Esophagus squamous epithelium (tissue), 5 donors: ENCODE measurements at regions of chr9 and their contacts with region 1.

Region 1: DNA sequence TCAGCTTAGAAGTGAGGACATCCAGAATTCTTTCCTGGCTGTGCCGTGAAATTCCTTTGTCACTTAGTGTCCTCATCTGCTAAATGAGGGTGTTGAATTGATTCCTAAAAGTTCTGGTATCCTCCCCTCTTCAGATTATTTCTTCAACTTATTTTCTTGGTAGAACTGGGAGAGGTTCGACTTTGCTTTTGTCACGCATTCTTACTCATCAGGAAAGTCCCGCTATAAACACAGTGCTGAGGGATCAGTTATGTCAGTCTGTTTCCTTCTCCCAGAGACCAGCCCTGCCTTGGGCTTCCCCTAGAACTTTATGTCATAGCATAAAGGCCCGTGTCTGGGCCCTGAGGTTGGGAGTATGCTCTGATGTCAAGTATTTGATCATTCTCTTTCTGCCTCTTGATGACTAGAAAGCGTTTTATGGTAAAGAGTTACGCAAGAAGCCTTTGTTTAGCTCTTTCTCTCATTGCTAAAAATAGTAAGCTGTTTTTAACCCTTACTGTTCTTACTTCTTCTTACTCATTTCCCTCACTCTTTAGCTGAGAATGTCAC is 29.6 kb downstream of the MTAP start:
- DNase-seq: no peak
- H3K4me3 ChIP-seq: no peak overlapping the region
- H3K27ac ChIP-seq: peak overlapping the region; percentile 77 to 87 (median 81)
- H3K4me1 ChIP-seq: peaks cover 21 to 94% (median 47%) of the 10 kb centered on the region in 3 donors
- H3K27me3 ChIP-seq: no peaks in the 10 kb centered on the region
- CTCF ChIP-seq: no peak
- POLR2A ChIP-seq: no peak

Region 2: GRCh38 chr9:21443849-21444625 is 388.0 kb before region 1 on chr9:
- intact Hi-C with region 1: no loop called
- DNase-seq: no peak
- H3K4me3 ChIP-seq: no peak overlapping the region
- H3K27ac ChIP-seq: no peak overlapping the region
- H3K4me1 ChIP-seq: no peaks in the 10 kb centered on the region
- H3K27me3 ChIP-seq: peaks cover 0 to 3% (median 0%) of the 10 kb centered on the region in 4 donors
- CTCF ChIP-seq: no peak
- POLR2A ChIP-seq: no peak

Region 3: GRCh38 chr9:21624675-21625644 is 207.1 kb before region 1 on chr9:
- intact Hi-C with region 1: no loop called
- DNase-seq: no peak
- H3K4me3 ChIP-seq: no peak overlapping the region
- H3K27ac ChIP-seq: no peak overlapping the region
- H3K4me1 ChIP-seq: peaks cover 0 to 4% (median 0%) of the 10 kb centered on the region in 3 donors
- H3K27me3 ChIP-seq: no peaks in the 10 kb centered on the region
- CTCF ChIP-seq: no peak
- POLR2A ChIP-seq: no peak

Region 4: GRCh38 chr9:21889673-21890072 is 57.6 kb after region 1 on chr9:
- intact Hi-C with region 1: loop called (anchors 10 kb)
- DNase-seq: no peak
- H3K4me3 ChIP-seq: no peak overlapping the region
- H3K27ac ChIP-seq: no peak overlapping the region
- H3K4me1 ChIP-seq: no peaks in the 10 kb centered on the region
- H3K27me3 ChIP-seq: no peaks in the 10 kb centered on the region
- CTCF ChIP-seq: no peak
- POLR2A ChIP-seq: no peak